ENCODE measurements at regions of chr5 and their contacts with region 1.

Region 1: DNA sequence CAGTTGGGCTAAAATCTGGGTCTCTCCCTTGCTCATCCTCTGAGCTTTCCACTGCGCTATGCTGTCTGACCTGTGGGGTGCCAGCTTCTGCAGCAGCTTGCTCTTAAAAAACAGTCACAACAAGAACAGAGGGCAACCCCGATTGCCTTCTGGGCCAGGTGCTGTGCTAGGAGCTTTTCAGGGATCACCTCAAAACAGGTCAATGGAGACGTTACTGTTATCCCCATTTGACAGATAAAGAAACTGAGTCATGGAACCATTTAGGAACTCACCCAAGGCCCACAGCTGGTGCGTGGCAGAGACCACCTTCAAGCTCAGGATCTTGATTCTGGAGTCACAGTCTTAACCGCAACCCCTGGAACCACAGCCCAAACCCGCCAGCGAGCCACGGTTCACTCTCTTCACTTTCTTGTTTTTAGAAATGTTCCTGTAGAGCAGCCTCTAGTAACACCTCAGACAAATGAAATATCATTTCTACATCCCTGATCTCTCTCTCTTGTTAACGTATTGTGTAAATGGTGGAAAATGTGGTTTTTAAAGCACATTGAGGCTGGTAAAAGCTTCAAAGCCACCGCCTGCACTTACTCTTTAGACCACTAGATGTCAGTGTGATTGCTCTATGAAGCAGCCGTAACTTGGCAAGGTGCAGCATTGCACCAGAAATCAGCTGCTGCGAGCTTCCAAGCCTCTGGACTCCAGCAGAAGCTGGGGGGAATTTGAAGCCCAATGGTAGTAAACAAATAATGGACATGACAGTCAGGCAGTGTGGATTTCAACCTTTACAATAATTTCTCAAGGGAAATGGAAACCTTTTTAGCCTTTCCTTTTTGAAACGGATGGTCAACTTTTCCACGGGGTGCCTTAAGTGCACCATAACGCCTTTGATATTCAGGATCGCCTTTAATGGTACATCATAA is 1.7 kb downstream of the FYB1 start:
- DNase-seq: peak; percentile 79
- H3K4me3 ChIP-seq: peak overlapping the region in 1 of 4 donors; percentile 17
- H3K27ac ChIP-seq: peak overlapping the region; percentile 30 to 69 (median 44)
- H3K4me1 ChIP-seq: peaks cover 0 to 7% (median 3%) of the 10 kb centered on the region in 4 donors
- H3K27me3 ChIP-seq: no peaks in the 10 kb centered on the region
- CTCF ChIP-seq: peak; percentile 96 to 98 (median 97)
- EP300 ChIP-seq: no peak
- POLR2A ChIP-seq: no peak

Region 2: DNA sequence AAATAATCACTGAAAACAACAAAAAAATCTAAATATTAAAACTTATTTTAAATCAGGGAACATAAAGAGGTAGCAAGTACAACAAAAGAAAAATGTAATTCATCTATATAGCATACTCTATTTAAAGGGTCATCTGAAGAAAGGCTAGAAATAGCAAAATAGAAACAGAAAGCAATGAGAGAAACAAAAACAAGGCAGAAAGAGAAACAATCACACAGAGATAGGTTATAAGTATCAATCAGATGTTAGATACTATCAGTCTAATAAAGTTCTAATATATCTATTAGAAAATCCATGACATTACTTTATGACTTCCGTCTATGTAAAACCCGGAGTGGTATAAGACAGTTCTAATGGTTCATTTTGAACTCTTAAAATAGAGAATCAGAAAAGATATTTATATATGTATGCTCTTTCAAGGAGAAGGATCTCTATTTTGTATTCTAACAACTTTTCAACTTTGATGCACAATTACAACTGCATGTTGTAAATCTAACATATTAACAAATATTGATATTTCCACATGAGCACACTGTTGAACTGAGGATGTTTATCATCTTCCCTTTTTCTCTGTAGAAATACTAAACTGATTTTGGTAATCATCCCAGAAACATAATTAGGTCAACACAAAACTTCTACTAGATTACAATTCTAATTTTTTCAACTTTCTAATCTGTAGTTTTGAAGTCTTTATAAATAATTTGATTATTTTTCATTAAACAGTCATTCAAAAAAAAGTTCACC is 159.3 kb before region 1 on chr5:
- in situ Hi-C with region 1: no loop called
- intact Hi-C with region 1: no loop called
- DNase-seq: no peak
- H3K4me3 ChIP-seq: peak overlapping the region in 2 of 4 donors; percentile 6 to 28
- H3K27ac ChIP-seq: peak overlapping the region in 1 of 4 donors; percentile 13
- H3K4me1 ChIP-seq: peaks cover 13 to 38% (median 15%) of the 10 kb centered on the region in 4 donors
- H3K27me3 ChIP-seq: no peaks in the 10 kb centered on the region
- CTCF ChIP-seq: no peak
- EP300 ChIP-seq: no peak
- POLR2A ChIP-seq: no peak

Region 3: DNA sequence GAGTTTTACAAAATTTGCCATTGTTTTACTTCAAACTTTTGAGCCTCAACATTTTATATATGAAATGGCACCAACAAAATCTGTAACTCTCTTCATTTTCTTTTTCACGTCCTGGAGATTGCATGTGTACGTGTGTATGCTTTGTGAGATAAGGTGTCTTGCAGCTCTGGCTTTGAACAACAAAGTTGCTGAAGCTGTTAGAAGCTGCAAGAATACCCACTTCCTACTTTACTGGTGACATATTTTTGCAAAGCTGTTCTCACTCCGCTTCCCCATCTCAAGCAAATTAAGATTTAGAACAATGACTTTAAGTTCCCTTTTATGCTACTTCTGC is 40.0 kb before region 1 on chr5:
- in situ Hi-C with region 1: no loop called
- intact Hi-C with region 1: no loop called
- DNase-seq: no peak
- H3K4me3 ChIP-seq: no peak overlapping the region
- H3K27ac ChIP-seq: peak overlapping the region; percentile 15 to 41 (median 26)
- H3K4me1 ChIP-seq: peaks cover 0 to 3% (median 0%) of the 10 kb centered on the region in 4 donors
- H3K27me3 ChIP-seq: no peaks in the 10 kb centered on the region
- CTCF ChIP-seq: no peak
- EP300 ChIP-seq: no peak
- POLR2A ChIP-seq: no peak

Region 4: GRCh38 chr5:39283231-39283818 is 65.7 kb after region 1 on chr5:
- in situ Hi-C with region 1: loop called in 3 of 4 experiments (anchors 5 to 10 kb)
- intact Hi-C with region 1: loop called (anchors 10 kb)
- DNase-seq: peak; percentile 26
- H3K4me3 ChIP-seq: no peak overlapping the region
- H3K27ac ChIP-seq: no peak overlapping the region
- H3K4me1 ChIP-seq: peaks cover 0 to 7% (median 0%) of the 10 kb centered on the region in 4 donors
- H3K27me3 ChIP-seq: no peaks in the 10 kb centered on the region
- CTCF ChIP-seq: peak; percentile 56 to 76 (median 62)
- EP300 ChIP-seq: no peak
- POLR2A ChIP-seq: no peak

Region 5: GRCh38 chr5:39547553-39548154 is 330.0 kb after region 1 on chr5:
- in situ Hi-C with region 1: loop called in 3 of 4 experiments (anchors 5 to 10 kb)
- intact Hi-C with region 1: loop called (anchors 10 kb)
- DNase-seq: peak; percentile 27
- H3K4me3 ChIP-seq: no peak overlapping the region
- H3K27ac ChIP-seq: peak overlapping the region in 1 of 4 donors; percentile 3
- H3K4me1 ChIP-seq: peaks cover 0 to 21% (median 3%) of the 10 kb centered on the region in 4 donors
- H3K27me3 ChIP-seq: no peaks in the 10 kb centered on the region
- CTCF ChIP-seq: peak; percentile 64 to 89 (median 72)
- EP300 ChIP-seq: no peak
- POLR2A ChIP-seq: no peak

Region 6: DNA sequence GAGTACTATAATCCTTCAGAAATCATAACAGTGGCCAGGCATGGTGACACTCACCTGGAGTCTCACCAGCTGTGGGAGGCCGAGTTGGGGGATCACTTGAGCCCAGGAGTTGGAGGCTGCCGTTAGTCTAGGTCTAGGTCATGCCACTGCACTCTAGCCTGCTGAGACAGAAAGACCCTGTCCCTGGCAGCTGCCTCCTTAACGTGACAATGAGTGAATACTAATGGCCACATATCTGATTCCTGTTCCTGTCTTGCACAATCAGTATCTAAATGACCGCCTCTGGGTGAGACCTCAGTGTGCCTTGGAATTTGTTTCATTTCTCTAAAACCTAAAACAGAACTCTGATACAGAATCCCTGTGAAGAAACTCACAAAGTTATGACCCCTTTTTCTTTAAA is 338.2 kb after region 1 on chr5:
- in situ Hi-C with region 1: loop called (anchors 5 to 10 kb)
- intact Hi-C with region 1: no loop called
- DNase-seq: no peak
- H3K4me3 ChIP-seq: no peak overlapping the region
- H3K27ac ChIP-seq: no peak overlapping the region
- H3K4me1 ChIP-seq: no peaks in the 10 kb centered on the region
- H3K27me3 ChIP-seq: no peaks in the 10 kb centered on the region
- CTCF ChIP-seq: no peak
- EP300 ChIP-seq: no peak
- POLR2A ChIP-seq: no peak

Region 7: DNA sequence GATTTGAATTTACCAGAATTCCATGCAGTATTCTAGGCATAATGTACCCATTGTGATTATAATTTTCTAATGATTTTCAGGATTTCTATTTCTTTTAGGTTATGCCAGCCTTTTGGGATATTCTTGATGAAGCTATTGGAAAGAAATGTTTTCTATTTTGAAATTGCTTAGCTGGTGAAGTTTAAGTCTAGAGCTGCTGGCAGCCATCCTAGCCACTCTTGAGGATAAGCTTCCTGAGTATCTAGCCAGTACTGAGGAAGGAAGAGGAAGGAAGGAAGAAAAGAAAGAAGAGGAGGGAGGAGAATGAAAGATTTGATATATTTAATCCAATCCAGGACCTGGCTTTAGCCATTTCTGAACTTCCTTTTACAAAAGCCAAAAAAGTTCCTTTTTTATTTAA is 349.3 kb after region 1 on chr5:
- in situ Hi-C with region 1: loop called in 1 of 4 experiments (anchors 10 kb)
- intact Hi-C with region 1: no loop called
- DNase-seq: no peak
- H3K4me3 ChIP-seq: no peak overlapping the region
- H3K27ac ChIP-seq: no peak overlapping the region
- H3K4me1 ChIP-seq: peaks cover 0 to 9% (median 5%) of the 10 kb centered on the region in 4 donors
- H3K27me3 ChIP-seq: no peaks in the 10 kb centered on the region
- CTCF ChIP-seq: no peak
- EP300 ChIP-seq: no peak
- POLR2A ChIP-seq: no peak